Posterior cingulate gyrus (tissue), 11 donors: ENCODE measurements at regions of chr6 and their contacts with region 1.

Region 1: GRCh38 chr6:42532038-42532669 is 31.7 kb upstream of the UBR2 start:
- DNase-seq: no peak

Region 2: GRCh38 chr6:42075159-42075838 is 456.9 kb before region 1 on chr6:
- intact Hi-C with region 1: loop called (anchors 10 kb)
- DNase-seq: peak; percentile 60 to 96 (median 75)

Region 3: GRCh38 chr6:42251911-42252637 is 280.1 kb before region 1 on chr6:
- intact Hi-C with region 1: loop called (anchors 10 kb)
- DNase-seq: peak in 3 of 10 donors; percentile 13 to 89 (median 74)

Region 4: DNA sequence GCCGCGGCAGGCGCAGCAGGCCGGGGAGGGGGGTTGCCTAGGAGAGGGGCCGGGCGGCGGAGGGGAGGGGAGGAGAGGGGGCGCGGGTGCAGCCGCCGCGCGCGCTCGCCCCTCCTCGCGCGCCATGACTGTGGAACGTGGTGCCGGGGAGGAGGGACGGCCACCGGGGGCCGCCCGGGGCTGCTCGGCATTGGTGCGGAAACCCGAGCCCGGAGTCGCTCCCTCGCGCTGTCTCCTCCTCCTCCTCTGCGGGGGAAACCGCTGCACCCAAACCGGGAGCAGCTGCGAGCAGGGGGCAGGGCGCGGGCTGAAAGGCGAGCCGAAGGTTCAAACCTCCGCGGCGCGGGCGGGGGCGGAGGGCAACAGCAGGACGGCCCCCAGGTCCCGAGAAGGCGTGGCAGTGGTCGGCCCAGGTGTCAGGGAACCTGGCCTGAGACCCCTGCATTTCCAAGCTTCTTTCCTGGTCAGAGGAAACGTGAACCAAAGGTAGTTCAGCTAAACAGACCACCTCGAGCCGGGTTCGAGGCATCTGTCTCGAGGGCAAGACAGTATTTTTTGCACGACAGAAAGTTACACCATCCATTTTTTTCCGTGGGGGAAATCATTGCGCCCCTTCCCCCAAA is 79.0 kb before region 1 on chr6:
- intact Hi-C with region 1: loop called (anchors 5 kb)
- DNase-seq: peak; percentile 49 to 97 (median 84)